Naive thymus-derived CD4-positive, alpha-beta T cell (primary cell): ENCODE measurements at regions of chr21 and their contacts with region 1.

Region 1: DNA sequence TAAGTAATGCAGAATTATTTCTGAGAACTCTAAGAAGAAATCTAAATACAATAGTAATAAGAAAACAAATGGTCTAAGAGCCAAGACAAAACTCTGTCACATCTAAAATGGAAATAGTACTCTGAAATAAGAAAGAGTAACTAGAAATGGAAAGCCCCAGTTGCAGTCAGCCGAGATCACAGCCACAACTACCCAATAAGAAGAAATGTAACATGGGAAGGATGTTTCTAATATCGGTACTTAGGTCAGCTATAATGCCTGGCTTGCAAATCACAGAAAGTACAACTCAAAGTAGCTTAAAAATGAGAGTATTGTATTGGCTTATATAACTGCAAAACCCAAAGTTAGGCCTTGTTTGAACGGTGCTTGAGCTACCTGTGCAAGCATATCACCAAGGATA is 58.6 kb upstream of the USP25 start:
- DNase-seq: no peak
- ATAC-seq: no peak
- H3K4me3 ChIP-seq: no peak overlapping the region
- H3K4me3 Mint-ChIP-seq: no peak overlapping the region
- H3K27ac ChIP-seq: no peak overlapping the region
- H3K27ac Mint-ChIP-seq: no peak overlapping the region
- H3K4me1 ChIP-seq: no peaks in the 10 kb centered on the region
- H3K4me1 Mint-ChIP-seq: no peaks in the 10 kb centered on the region
- H3K27me3 ChIP-seq: no peaks in the 10 kb centered on the region
- H3K27me3 Mint-ChIP-seq: no peaks in the 10 kb centered on the region

Region 2: DNA sequence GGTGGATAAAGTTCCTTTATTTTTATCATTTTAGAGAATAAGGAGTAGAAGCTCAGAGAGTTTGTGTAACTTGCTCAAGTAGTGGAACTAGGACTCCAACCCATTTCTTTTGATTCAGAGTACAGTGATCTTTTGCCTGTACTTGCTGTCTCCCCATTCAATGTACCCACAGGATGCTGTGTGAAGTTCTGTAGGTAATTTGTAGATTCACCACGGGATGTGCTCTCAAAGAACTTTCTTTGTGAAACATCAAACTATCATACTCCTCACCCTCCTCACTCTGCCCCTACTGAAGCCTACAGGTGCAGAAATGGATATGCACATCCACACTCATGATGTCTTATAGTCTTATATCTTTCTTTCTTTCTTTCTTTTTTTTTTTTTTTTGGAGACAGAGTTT is 1222.4 kb before region 1 on chr21:
- CTCF ChIA-PET with region 1: no interaction called
- POLR2A ChIA-PET with region 1: no interaction called
- intact Hi-C with region 1: loop called in 1 of 2 experiments (anchors 5 kb)
- DNase-seq: peak in 4 of 9 donors; percentile 2 to 15 (median 5)
- ATAC-seq: no peak
- H3K4me3 ChIP-seq: no peak overlapping the region
- H3K4me3 Mint-ChIP-seq: no peak overlapping the region
- H3K27ac ChIP-seq: no peak overlapping the region
- H3K27ac Mint-ChIP-seq: peak overlapping the region in 1 of 9 donors; percentile 23
- H3K4me1 ChIP-seq: peaks cover 0 to 4% of the 10 kb centered on the region in 2 donors
- H3K4me1 Mint-ChIP-seq: peaks cover 0 to 46% (median 0%) of the 10 kb centered on the region in 7 donors
- H3K27me3 ChIP-seq: no peaks in the 10 kb centered on the region
- H3K27me3 Mint-ChIP-seq: no peaks in the 10 kb centered on the region